ENCODE measurements at regions of chr10 and their contacts with region 1.

Region 1: GRCh38 chr10:111993872-111994426 is 189.6 kb downstream of the GPAM start:
- DNase-seq: no peak
- ATAC-seq: no peak
- H3K4me3 Mint-ChIP-seq: no peak overlapping the region
- H3K27ac Mint-ChIP-seq: no peak overlapping the region
- H3K4me1 Mint-ChIP-seq: no peaks in the 10 kb centered on the region
- H3K27me3 Mint-ChIP-seq: peaks cover 3% of the 10 kb centered on the region
- CTCF ChIP-seq: no peak

Region 2: DNA sequence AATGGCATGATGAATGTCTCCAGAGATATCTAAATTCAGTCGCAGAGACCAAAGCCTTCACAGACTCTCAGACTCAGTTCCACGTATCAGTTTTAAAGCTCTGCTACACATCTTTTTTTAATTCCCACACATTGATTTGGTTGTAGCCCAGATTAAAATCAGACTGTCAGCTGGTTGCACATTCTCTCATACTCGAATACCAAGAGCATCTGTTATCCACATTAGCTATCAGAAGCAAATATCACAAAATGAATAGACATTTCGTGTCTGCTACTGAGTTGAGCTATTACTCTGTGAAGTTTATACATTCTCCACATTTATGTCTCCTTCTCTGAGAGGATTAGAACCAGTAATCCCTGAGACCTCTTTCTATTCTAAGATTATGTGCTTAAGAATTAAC is 39.6 kb before region 1 on chr10:
- CTCF ChIA-PET with region 1: no interaction called
- POLR2A ChIA-PET with region 1: no interaction called
- intact Hi-C with region 1: loop called (anchors 2 kb)
- DNase-seq: no peak
- ATAC-seq: no peak
- H3K4me3 Mint-ChIP-seq: no peak overlapping the region
- H3K27ac Mint-ChIP-seq: no peak overlapping the region
- H3K4me1 Mint-ChIP-seq: no peaks in the 10 kb centered on the region
- H3K27me3 Mint-ChIP-seq: no peaks in the 10 kb centered on the region
- CTCF ChIP-seq: no peak

Measured in activated B cell treated with CpG ODN at 0.5 μM for 24 hours (primary cell).